Activated T-helper 2 cell treated with anti-CD3 and anti-CD28 coated beads, Interferon-gamma antibody, Interleukin-2, Interleukin-4, amounts not matched to agents 10 μg/mL and 5 μg/mL and 100 μg/mL, durations not matched to agents 14 hours and 24 hours and 36 hours (primary cell): ENCODE measurements at regions of chrX and their contacts with region 1.

Region 1: GRCh38 chrX:118571829-118572228 is 76.2 kb downstream of the DOCK11 start:
- DNase-seq: no peak
- H3K4me3 Mint-ChIP-seq: no peak overlapping the region
- H3K27ac Mint-ChIP-seq: no peak overlapping the region
- H3K4me1 Mint-ChIP-seq: peaks cover 15% of the 10 kb centered on the region
- H3K27me3 Mint-ChIP-seq: no peaks in the 10 kb centered on the region

Region 2: GRCh38 chrX:118383120-118383519 is 188.7 kb before region 1 on chrX:
- intact Hi-C with region 1: no loop called
- DNase-seq: no peak
- H3K4me3 Mint-ChIP-seq: no peak overlapping the region
- H3K27ac Mint-ChIP-seq: no peak overlapping the region
- H3K4me1 Mint-ChIP-seq: no peaks in the 10 kb centered on the region
- H3K27me3 Mint-ChIP-seq: no peaks in the 10 kb centered on the region

Region 3: GRCh38 chrX:118526149-118526548 is 45.7 kb before region 1 on chrX:
- intact Hi-C with region 1: no loop called
- DNase-seq: no peak
- H3K4me3 Mint-ChIP-seq: no peak overlapping the region
- H3K27ac Mint-ChIP-seq: peak overlapping the region; percentile 81
- H3K4me1 Mint-ChIP-seq: peaks cover 55% of the 10 kb centered on the region
- H3K27me3 Mint-ChIP-seq: no peaks in the 10 kb centered on the region

Region 4: GRCh38 chrX:118536687-118537461 is 35.0 kb before region 1 on chrX:
- intact Hi-C with region 1: loop called (anchors 2 kb)
- DNase-seq: peak; percentile 23
- H3K4me3 Mint-ChIP-seq: peak overlapping the region; percentile 59
- H3K27ac Mint-ChIP-seq: peak overlapping the region; percentile 98
- H3K4me1 Mint-ChIP-seq: peaks cover 52% of the 10 kb centered on the region
- H3K27me3 Mint-ChIP-seq: no peaks in the 10 kb centered on the region